Astrocyte of the cerebellum (primary cell): ENCODE measurements at regions of chr11 and their contacts with region 1.

Region 1: GRCh38 chr11:16007514-16007913 is 348.8 kb downstream of the SOX6 start:
- DNase-seq: no peak
- H3K4me3 ChIP-seq: no peak overlapping the region
- CTCF ChIP-seq: no peak

Region 2: DNA sequence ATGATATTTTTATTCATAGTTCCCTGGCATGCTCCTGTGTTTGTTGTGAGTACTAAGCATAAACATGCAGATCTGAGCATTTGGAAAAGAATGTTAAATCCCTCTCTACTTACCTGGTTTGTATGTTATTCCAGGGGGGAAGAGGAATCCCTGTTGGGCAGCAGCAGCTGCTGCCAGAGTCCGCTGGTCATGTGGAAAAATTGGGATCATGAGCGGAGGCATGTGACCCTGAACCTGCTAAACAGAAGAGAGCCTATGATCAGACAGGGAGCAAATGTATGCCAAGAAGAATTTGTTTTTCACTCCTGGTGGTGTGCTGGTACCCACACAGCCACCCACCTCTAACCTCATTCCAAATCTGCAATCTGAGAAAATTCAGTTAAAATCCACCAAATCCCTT is 104.2 kb after region 1 on chr11:
- in situ Hi-C with region 1: loop called (anchors 5 kb)
- DNase-seq: no peak
- H3K4me3 ChIP-seq: no peak overlapping the region
- CTCF ChIP-seq: no peak